Tibial artery (tissue), 4 donors: ENCODE measurements at regions of chr14 and their contacts with region 1.

Region 1: GRCh38 chr14:38721822-38722431 is 381.1 kb downstream of the SEC23A start:
- DNase-seq: peak; percentile 77 to 80
- H3K4me3 ChIP-seq: no peak overlapping the region
- H3K27ac ChIP-seq: no peak overlapping the region
- H3K4me1 ChIP-seq: peaks cover 0 to 24% (median 1%) of the 10 kb centered on the region in 4 donors
- H3K27me3 ChIP-seq: no peaks in the 10 kb centered on the region
- CTCF ChIP-seq: peak; percentile 81 to 86

Region 2: GRCh38 chr14:38867561-38868150 is 145.7 kb after region 1 on chr14:
- intact Hi-C with region 1: loop called (anchors 2 kb)
- DNase-seq: peak; percentile 77 to 78
- H3K4me3 ChIP-seq: no peak overlapping the region
- H3K27ac ChIP-seq: no peak overlapping the region
- H3K4me1 ChIP-seq: peaks cover 0 to 20% (median 8%) of the 10 kb centered on the region in 4 donors
- H3K27me3 ChIP-seq: no peaks in the 10 kb centered on the region
- CTCF ChIP-seq: peak; percentile 73 to 79

Region 3: DNA sequence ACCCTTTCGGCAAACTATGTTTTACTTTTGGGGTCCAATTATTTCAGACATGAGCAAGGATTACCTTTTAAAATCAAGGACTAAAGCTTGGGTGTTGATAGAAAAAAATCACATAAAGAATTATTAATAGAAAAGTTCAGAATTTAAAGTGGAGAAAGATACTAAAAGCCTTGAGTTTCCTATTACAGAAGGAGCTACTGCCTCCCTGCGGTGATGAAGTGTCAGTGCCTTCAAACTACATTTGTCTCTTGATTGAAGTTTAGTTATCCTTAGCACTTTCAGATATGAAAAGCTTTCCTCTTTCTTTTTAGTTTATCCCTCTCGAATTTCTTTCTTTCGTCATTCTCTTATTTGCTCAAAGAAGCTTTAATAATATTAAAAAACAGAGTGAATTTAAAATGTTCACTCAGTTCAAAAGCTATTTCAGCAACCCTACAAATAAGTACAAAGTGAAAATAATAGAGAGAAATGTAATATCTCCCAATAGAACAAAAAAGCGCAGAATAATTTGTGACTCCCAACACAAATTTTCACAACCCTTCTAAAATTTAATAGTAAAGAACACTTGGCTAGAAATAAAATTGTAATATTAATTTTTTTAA is 293.5 kb after region 1 on chr14:
- intact Hi-C with region 1: loop called (anchors 10 kb)
- DNase-seq: no peak
- H3K4me3 ChIP-seq: no peak overlapping the region
- H3K27ac ChIP-seq: no peak overlapping the region
- H3K4me1 ChIP-seq: no peaks in the 10 kb centered on the region
- H3K27me3 ChIP-seq: no peaks in the 10 kb centered on the region
- CTCF ChIP-seq: peak; percentile 65 to 68